GM10248 (cell line): ENCODE measurements at regions of chr5 and their contacts with region 1.

Region 1: GRCh38 chr5:36739751-36740221 is 133.4 kb downstream of the SLC1A3 start:
- DNase-seq: peak; percentile 67
- CTCF ChIP-seq: peak; percentile 93

Region 2: DNA sequence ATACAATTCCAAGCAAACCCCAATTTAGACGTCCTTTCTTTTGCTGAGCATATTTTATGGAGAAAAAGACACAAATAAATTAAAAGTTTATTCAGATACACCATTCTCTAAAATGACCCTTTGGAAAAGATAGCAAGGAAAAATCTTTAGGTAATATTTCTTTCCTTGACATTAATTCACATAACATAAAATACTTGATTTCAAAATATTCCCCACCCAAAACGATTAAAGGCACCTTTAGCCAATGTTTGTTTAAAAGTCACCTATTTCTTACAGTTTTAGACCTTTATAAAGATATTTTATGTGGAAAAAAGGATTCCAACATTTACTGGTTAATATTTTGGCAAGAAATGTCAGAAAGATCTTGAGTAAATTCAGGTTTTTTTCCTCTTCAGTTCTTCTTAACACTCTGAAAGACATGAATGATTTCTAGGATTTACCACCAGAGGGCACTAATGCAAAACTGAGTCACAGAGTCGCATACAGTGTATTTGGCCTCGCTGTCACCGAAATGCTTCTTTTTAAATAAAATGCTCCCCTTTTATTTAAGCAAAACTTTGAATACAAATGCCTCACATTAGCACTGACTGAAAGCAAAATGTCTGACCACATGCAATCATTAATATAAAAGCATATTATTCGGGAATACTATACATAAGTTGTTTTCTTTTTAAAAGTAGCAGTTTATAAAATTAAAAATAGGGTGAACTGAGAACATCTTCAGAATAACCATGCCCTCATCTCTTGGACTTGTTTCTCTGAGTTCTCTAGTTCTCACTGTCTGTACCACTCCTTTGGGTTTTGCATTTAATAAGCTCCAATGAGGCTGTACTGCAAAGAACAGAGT is 10.9 kb before region 1 on chr5:
- CTCF ChIA-PET with region 1: interaction called, 95 read pairs
- POLR2A ChIA-PET with region 1: no interaction called
- DNase-seq: peak; percentile 62
- CTCF ChIP-seq: peak; percentile 75

Region 3: DNA sequence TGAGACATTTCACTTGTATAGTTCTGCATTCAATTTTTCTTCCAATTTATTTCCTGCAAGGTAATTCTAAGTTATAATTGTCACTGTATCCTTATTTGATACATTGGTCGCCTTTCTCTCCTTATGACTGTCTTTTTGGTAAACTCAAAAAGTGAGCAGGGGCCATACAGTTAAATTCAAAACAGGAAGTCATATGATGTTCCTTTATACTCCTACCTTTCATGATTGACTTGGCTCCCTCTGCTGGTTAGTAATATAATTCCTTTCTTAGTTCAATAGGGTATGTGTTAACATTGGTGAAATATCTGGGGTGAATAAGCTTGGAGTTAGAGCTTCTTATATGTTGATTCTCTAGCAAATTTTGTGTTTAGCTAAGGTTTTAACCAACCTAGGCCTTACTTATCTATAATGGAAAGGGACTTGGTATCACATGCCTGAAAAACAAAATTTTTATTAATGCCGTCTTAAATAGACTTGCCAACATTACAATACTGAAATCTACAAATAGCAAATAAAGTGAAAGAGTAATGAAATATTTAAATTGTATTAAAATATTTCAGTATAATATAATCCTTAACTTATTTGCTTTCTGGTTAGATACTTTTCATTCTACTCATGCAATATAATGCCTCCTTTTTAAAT is 130.7 kb after region 1 on chr5:
- CTCF ChIA-PET with region 1: interaction called, 68 read pairs
- POLR2A ChIA-PET with region 1: no interaction called
- DNase-seq: peak; percentile 64
- CTCF ChIP-seq: peak; percentile 62

Region 4: DNA sequence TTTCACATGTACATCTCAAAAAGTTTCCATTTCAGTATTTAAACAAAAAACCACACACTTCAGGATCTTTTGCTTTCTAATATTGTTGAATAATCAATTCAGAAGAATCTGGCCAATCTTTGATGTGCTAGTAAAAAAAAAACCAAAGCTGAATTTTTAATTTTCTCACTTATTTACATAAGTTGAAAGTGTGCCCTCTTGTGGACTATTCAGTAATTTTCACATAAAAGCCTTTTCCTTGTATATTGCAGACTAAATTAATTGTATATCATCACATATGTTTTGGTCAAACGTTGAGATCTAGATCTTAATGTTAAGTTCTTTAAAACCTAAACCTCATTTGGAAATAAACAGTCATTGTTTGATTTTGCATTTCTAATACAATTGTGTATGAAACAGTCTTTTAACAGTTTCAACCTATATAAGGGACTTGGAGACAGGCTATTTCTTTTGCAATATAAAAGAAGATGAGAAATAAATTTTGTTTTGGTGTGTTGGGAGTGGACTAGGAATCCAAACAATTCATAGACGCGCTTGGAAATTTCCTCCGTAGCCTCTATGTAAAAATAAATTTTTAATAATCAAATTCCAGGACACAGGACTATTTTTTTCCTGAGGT is 204.9 kb after region 1 on chr5:
- CTCF ChIA-PET with region 1: interaction called, 13 read pairs
- POLR2A ChIA-PET with region 1: no interaction called
- DNase-seq: peak; percentile 19
- CTCF ChIP-seq: peak; percentile 25